Activated CD8-positive, alpha-beta memory T cell treated with anti-CD3 and anti-CD28 coated beads, Interleukin-2, amount 10 ng/mL, durations not matched to agents 7 days and 5 days (primary cell): ENCODE measurements at regions of chr1 and their contacts with region 1.

Region 1: GRCh38 chr1:27357281-27358037 is 9.3 kb downstream of the MAP3K6 start:
- DNase-seq: peak; percentile 87
- ATAC-seq: peak; percentile 76
- H3K4me3 Mint-ChIP-seq: peak overlapping the region; percentile 73
- H3K27ac Mint-ChIP-seq: peak overlapping the region; percentile 93
- H3K4me1 Mint-ChIP-seq: peaks cover 44% of the 10 kb centered on the region
- H3K27me3 Mint-ChIP-seq: peaks cover 8% of the 10 kb centered on the region

Region 2: GRCh38 chr1:27341525-27342252 is 15.8 kb before region 1 on chr1 and contains the start of gene SYTL1:
- CTCF ChIA-PET with region 1: interaction called, 136 read pairs
- DNase-seq: peak; percentile 86
- ATAC-seq: peak; percentile 77
- H3K4me3 Mint-ChIP-seq: peak within 1 kb of the TSS; percentile 86
- H3K27ac Mint-ChIP-seq: peak within 1 kb of the TSS; percentile 84
- H3K4me1 Mint-ChIP-seq: peaks cover 34% of the 10 kb centered on the region
- H3K27me3 Mint-ChIP-seq: no peaks in the 10 kb centered on the region
- total RNA-seq, gene SYTL1: 60.7 to 85.3 TPM

Region 3: GRCh38 chr1:27383039-27383605 is 25.7 kb after region 1 on chr1 and contains the start of gene CD164L2:
- CTCF ChIA-PET with region 1: interaction called, 34 read pairs
- DNase-seq: no peak
- ATAC-seq: peak; percentile 68
- H3K4me3 Mint-ChIP-seq: no peak within 1 kb of the TSS
- H3K27ac Mint-ChIP-seq: no peak within 1 kb of the TSS
- H3K4me1 Mint-ChIP-seq: no peaks in the 10 kb centered on the region
- H3K27me3 Mint-ChIP-seq: peaks cover 8% of the 10 kb centered on the region
- total RNA-seq, gene CD164L2: not detected